ENCODE measurements at regions of chr1 and their contacts with region 1.

Region 1: DNA sequence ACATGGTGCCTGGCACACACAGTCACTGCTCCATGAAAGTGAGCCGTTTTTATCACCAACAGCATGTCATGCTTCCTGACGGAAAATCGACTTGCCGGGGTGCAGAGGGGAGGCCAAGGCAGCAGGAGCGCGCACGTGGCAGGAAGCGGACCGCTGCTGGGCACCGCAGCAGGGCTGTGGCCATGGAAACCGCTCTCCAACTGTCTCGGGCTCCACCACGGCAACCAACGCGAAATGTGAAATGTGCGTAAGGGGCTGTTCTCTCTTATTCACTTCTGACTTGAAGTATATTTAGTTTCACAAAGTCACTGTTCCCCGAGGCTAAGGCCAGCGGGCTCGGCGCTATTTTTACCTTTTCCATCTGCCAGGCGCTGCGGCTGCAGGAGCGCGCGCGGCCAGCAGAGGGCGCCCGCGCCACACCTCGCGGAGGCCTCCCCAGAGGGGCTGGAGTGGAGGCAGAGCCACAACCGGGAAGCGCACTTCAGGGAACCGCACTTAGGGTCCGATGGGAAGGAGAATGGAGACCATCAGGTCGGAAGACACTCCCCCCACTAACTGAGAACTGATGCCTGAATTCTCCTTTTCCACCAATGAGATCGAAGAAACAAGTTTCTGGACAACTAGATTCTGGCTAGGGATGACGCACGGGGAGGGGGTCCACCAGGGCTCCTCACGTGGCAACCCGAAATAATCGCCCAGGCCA is 19.7 kb downstream of the RCC2 start:
- DNase-seq: peak; percentile 76
- ATAC-seq: peak; percentile 80
- H3K4me3 ChIP-seq: no peak overlapping the region
- H3K4me3 Mint-ChIP-seq: no peak overlapping the region
- H3K27ac ChIP-seq: no peak overlapping the region
- H3K27ac Mint-ChIP-seq: no peak overlapping the region
- H3K4me1 ChIP-seq: no peaks in the 10 kb centered on the region
- H3K4me1 Mint-ChIP-seq: peaks cover 1% of the 10 kb centered on the region
- H3K27me3 ChIP-seq: no peaks in the 10 kb centered on the region
- H3K27me3 Mint-ChIP-seq: no peaks in the 10 kb centered on the region
- CTCF ChIP-seq: peak; percentile 99

Region 2: DNA sequence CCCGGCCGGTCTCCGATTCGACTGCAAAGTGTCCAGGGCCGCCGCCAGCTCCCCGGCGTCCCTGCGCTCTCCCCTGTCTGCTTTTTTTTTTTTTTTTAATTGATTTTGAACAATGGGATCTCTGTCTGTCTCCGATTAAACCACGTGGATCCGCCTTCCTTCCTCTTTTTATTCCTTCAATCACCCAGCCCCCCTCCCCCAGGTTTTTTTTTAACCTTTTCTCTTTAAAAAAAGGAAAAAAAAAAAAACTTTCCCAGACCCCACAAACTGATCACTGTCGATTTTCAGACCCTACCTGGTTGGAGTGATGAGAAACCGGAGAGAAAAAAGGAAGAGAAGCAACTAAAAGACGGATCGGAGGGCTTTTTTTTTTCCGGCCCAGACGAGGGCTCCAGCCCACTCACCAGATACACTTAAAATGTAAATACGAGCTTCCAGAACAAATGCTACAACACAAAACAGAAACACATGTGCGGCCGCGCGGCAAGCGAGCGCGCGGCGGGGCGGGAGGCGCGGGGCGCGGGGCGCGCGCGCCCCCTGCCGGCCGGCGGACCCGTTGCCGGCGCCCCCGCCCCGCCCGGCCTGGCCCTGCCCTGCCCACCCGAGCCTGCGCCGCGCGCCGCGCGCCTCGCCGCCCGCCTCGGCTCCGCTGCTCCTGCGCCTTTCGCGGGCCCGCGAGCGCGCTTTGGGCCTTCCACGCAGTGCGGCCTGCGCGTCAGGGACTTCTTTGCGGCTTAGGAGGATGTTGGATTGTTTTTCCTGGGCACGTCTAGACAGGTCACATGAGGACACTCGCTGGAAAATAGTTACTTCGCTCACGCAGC is 19.7 kb after region 1 on chr1 and contains the start of gene RCC2:
- CTCF ChIA-PET with region 1: interaction called, 6 read pairs
- POLR2A ChIA-PET with region 1: no interaction called
- intact Hi-C with region 1: loop called (anchors 1 kb)
- DNase-seq: peak; percentile 87
- ATAC-seq: peak; percentile 69
- H3K4me3 ChIP-seq: peak within 1 kb of the TSS; percentile 77 to 97 (median 87)
- H3K4me3 Mint-ChIP-seq: peak within 1 kb of the TSS; percentile 88
- H3K27ac ChIP-seq: peak within 1 kb of the TSS; percentile 70 to 87
- H3K27ac Mint-ChIP-seq: peak within 1 kb of the TSS; percentile 90
- H3K4me1 ChIP-seq: peaks cover 27 to 35% of the 10 kb centered on the region in 2 donors
- H3K4me1 Mint-ChIP-seq: peaks cover 31% of the 10 kb centered on the region
- H3K27me3 ChIP-seq: peaks cover 0 to 12% (median 3%) of the 10 kb centered on the region in 4 experiments
- H3K27me3 Mint-ChIP-seq: peaks cover 18% of the 10 kb centered on the region
- CTCF ChIP-seq: no peak
- total RNA-seq, gene RCC2: 76.9 TPM in 2 replicates

Region 3: DNA sequence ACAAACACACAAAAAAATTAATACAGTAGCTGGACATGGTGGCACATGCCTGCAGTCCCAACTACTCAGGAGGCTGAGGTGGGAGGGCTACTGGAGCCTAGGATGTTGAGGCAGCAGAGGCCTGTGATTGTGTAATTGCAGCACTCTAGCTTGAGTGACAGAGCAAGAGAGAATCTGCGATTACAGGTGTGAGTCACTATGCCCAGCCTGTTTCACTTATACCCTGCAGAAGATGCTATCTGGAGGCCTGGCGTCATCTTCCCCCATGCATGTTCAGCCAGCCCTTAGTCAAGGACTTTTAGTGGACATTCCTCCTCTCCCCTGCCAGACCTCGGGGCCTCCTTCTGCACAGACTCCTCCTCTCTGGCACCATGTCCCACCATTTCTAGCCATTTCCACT is 56.0 kb after region 1 on chr1:
- CTCF ChIA-PET with region 1: interaction called, 7 read pairs
- POLR2A ChIA-PET with region 1: no interaction called
- intact Hi-C with region 1: loop called (anchors 1 kb)
- DNase-seq: no peak
- ATAC-seq: no peak
- H3K4me3 ChIP-seq: no peak overlapping the region
- H3K4me3 Mint-ChIP-seq: no peak overlapping the region
- H3K27ac ChIP-seq: no peak overlapping the region
- H3K27ac Mint-ChIP-seq: no peak overlapping the region
- H3K4me1 ChIP-seq: no peaks in the 10 kb centered on the region
- H3K4me1 Mint-ChIP-seq: no peaks in the 10 kb centered on the region
- H3K27me3 ChIP-seq: no peaks in the 10 kb centered on the region
- H3K27me3 Mint-ChIP-seq: no peaks in the 10 kb centered on the region
- CTCF ChIP-seq: no peak

Region 4: GRCh38 chr1:17485280-17485679 is 65.5 kb after region 1 on chr1:
- CTCF ChIA-PET with region 1: interaction called, 3 read pairs
- POLR2A ChIA-PET with region 1: no interaction called
- intact Hi-C with region 1: loop called (anchors 2 kb)
- DNase-seq: peak; percentile 12
- ATAC-seq: no peak
- H3K4me3 ChIP-seq: no peak overlapping the region
- H3K4me3 Mint-ChIP-seq: no peak overlapping the region
- H3K27ac ChIP-seq: no peak overlapping the region
- H3K27ac Mint-ChIP-seq: no peak overlapping the region
- H3K4me1 ChIP-seq: no peaks in the 10 kb centered on the region
- H3K4me1 Mint-ChIP-seq: no peaks in the 10 kb centered on the region
- H3K27me3 ChIP-seq: peaks cover 0 to 3% (median 0%) of the 10 kb centered on the region in 4 experiments
- H3K27me3 Mint-ChIP-seq: peaks cover 15% of the 10 kb centered on the region
- CTCF ChIP-seq: peak; percentile 17